ENCODE measurements at regions of chr20 and their contacts with region 1.

Region 1: DNA sequence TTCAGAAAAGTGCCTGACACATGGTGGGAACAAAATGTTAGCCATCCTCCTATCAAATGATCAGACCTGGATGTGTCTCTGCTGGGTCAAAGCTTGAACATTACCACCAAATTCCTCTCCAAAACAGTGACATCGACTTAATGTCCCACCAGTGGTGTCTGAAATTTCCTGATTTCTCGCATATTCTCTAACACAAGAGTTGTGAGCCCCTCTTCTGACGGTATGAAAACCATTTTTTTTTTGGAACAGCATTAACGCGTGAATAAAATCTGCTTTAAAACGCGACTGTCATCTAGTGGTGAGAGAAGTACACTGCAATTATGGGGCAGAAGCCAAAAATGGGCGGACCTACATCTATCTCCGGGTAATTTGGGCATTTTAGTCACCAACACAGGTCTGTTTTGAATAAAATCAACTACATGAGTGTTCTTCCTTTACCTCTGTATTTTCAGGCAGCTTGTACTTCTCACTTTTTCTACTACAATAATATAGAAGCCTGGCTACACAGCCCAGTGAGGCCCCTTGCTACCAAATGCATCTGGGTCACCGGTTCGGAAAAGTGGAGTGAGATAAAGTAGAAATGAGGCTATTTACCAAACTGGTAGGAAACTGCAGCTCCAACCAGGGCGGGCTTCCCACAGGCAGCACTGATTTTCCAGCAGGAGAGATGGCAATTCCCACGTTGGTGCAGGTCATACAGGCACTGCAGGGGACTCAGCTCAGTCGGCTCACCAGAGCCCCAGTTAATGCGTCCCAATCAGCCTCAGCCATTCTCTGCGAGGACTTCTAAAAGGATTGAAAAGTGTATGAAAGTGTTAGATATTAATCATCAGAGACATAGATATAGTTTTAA is 27.4 kb downstream of the MGME1 start:
- DNase-seq: peak; percentile 46
- H3K4me3 Mint-ChIP-seq: no peak overlapping the region
- H3K27ac Mint-ChIP-seq: no peak overlapping the region
- H3K4me1 Mint-ChIP-seq: peaks cover 43% of the 10 kb centered on the region
- H3K27me3 Mint-ChIP-seq: peaks cover 3% of the 10 kb centered on the region

Region 2: DNA sequence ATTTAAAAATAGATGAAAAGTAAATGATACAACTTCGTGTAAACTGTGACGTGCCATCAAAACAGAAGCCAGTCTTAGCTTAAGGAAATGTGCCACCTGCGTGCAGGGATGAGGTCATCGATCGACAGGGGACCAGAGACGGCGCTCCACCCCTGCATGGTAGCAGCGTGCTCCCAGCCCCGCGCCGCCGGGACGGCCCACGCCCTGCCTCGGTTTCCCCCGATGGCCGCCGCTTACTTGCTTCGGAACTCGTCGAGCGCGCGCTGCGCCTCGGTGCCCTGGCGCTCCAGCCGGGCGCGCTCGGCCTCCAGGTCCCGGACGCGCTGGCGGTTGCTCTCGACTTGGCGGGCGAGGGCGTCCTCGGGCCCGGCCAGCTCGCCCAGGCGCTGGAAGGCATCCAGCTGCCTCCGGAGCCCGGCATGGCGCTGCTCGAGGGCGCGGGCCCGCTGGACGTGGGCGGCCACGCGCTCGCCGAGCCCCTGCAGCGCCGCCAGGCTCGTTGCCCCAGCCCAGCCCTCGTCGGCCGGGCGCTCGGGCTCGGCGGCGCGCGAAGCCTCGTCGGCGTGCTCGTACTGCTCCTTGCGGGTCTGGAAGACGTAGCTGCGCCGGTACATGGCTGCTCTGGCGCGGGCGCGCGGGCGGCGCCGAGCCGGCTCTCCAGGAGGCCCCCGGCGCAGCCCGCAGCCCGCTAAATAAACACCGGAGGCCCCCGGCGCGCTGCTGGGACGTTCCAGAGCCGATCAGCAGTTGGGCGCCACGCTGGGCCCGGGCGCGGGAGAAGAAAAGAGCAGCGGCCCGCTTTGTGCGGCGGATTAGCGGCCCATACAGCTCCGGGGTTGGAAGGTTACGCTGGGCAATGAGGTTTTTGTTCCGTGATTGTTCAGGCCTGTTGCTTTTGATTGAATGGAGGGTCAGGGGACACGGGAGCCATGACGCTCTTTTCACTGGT is 465.2 kb before region 1 on chr20 and contains the start of gene BFSP1:
- intact Hi-C with region 1: loop called (anchors 1 kb)
- DNase-seq: peak; percentile 44
- H3K4me3 Mint-ChIP-seq: peak within 1 kb of the TSS; percentile 88
- H3K27ac Mint-ChIP-seq: peak within 1 kb of the TSS; percentile 95
- H3K4me1 Mint-ChIP-seq: peaks cover 30% of the 10 kb centered on the region
- H3K27me3 Mint-ChIP-seq: peaks cover 12% of the 10 kb centered on the region
- total RNA-seq, gene BFSP1: 0.76 and 0.80 TPM in 2 replicates

Region 3: DNA sequence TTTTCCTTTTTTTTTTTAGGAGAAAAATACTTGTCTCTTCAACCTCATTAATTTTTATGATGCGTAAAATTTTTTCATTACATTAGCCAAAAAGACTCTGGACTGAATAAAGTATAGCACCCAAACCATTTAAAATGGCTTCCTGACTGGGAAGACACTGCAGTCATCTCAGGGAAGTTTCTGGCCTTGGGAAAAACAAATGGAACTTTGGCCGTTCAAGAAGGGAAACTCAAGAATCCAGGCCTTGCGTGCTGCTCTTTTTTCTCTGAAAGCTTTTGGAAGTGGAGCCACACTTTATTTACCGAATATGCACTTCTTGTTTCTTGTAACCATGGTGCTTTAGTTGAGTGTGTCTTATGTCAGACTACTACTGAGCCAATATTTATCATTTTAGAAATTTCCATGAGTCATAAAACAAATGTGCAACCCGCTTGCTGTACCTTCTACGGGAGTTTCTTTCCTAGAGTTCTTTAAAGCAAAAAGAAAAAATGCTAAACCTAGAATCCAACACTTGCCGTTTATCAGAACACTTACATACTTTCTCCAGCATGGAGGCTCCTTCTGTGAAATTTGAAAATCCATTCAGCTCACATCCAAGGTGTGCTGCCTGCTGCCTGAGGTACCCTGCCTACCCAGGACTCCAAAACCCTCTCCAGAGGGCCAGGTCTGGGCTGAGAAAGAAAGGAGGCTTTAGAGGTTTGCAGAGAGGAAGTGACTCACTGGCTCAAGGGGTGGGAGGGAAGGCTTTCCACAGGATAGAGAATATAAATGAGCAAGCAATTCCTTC is 437.8 kb before region 1 on chr20:
- intact Hi-C with region 1: loop called (anchors 1 kb)
- DNase-seq: no peak
- H3K4me3 Mint-ChIP-seq: peak overlapping the region; percentile 71
- H3K27ac Mint-ChIP-seq: peak overlapping the region; percentile 95
- H3K4me1 Mint-ChIP-seq: peaks cover 43% of the 10 kb centered on the region
- H3K27me3 Mint-ChIP-seq: no peaks in the 10 kb centered on the region

Region 4: DNA sequence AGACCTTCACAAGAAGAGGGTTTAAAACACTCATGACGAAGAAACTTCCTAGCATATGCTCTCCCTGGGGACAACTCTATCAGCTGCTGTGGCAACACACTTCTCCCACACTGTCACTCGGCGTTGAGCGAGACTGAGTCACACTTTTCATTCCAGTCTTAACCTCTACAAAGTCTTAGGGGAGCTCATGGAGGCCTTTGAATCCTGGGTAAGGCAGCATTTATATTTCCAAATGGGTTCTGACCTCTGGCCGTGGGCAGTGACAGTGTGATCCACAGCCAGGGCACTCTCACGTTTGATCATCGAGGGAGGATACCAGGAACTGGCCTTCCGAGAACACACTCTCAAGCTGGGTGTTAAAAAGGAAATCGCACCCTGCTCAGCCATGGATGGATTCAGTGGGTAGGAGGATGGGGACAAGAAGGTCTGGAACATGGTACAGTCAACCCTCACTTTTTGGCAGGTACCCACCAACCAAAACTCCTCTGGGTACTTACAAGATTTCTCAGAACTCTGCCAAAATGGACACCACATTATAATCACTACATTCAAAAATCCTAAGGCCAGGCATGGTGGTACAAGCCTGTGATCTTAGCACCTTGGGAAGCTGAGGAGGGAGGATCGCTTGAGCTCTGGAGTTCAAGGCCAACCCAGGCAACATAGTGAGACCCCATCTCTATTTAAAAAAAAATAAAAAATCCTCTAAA is 333.7 kb before region 1 on chr20:
- intact Hi-C with region 1: loop called (anchors 5 kb)
- DNase-seq: no peak
- H3K4me3 Mint-ChIP-seq: no peak overlapping the region
- H3K27ac Mint-ChIP-seq: peak overlapping the region; percentile 72
- H3K4me1 Mint-ChIP-seq: peaks cover 70% of the 10 kb centered on the region
- H3K27me3 Mint-ChIP-seq: no peaks in the 10 kb centered on the region

Region 5: DNA sequence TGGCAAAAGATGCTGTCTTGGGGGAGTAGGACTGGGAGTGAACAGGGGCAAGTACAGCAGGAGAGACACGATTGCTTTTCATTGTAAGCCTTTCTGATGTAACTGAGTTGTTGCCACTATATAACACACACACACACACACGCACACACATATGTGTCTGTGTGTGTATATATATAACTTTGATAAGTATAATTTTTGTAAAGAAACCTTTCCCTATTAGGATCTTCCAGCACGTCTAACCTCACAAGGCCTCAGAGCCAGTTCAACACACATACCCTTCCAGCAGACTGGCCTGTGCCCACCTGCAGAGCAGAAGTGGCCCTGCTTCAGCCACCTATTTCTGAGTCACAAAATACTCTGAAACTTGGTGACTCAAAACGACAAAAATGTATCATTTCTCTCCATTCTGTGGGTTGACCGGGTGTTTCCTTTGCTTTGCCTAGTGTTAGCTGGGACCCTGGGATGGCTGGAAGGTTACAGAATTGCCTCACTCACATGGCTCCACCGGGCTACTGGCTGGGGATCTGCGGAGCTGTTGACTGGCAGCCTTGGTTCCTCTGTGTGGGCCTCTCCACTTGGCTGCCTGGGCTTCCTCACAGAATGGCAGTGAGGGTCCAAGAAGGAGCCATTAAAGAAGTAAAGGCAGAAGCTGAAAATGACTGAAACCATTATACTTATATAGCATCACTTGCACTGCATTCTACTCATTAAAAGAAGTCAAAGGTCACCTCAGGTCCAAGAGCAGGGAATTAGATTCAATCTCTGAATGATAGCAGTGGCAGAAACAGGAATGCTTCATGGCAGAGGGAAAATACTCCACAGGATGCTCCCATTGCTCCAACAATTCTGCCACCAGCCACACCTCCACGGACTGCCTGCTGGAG is 170.0 kb before region 1 on chr20:
- intact Hi-C with region 1: loop called (anchors 2 kb)
- DNase-seq: peak; percentile 5
- H3K4me3 Mint-ChIP-seq: no peak overlapping the region
- H3K27ac Mint-ChIP-seq: peak overlapping the region; percentile 71
- H3K4me1 Mint-ChIP-seq: peaks cover 15% of the 10 kb centered on the region
- H3K27me3 Mint-ChIP-seq: peaks cover 4% of the 10 kb centered on the region

Region 6: DNA sequence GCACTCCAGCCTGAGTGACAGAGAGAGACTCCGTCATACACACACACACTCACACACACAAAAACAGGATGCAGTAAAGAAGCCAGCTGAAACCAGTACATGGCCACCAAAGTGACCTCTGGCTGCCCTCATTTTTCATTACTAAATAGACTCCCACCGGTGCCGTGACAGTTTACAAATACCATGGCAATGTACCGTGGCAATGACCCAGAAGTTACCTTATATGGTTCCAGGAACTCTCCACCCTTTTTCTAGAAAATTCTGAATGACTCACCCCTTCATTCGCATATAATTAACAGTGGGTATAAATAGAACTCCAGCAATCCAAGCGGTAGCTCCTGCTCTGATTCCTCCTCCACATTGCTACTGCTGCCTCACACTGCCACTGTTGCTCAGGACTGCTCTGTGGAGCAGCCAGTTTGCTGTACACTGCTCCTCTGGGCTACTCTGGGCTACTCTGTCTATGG is 85.3 kb before region 1 on chr20:
- intact Hi-C with region 1: no loop called
- DNase-seq: no peak
- H3K4me3 Mint-ChIP-seq: no peak overlapping the region
- H3K27ac Mint-ChIP-seq: no peak overlapping the region
- H3K4me1 Mint-ChIP-seq: no peaks in the 10 kb centered on the region
- H3K27me3 Mint-ChIP-seq: peaks cover 14% of the 10 kb centered on the region

Region 7: DNA sequence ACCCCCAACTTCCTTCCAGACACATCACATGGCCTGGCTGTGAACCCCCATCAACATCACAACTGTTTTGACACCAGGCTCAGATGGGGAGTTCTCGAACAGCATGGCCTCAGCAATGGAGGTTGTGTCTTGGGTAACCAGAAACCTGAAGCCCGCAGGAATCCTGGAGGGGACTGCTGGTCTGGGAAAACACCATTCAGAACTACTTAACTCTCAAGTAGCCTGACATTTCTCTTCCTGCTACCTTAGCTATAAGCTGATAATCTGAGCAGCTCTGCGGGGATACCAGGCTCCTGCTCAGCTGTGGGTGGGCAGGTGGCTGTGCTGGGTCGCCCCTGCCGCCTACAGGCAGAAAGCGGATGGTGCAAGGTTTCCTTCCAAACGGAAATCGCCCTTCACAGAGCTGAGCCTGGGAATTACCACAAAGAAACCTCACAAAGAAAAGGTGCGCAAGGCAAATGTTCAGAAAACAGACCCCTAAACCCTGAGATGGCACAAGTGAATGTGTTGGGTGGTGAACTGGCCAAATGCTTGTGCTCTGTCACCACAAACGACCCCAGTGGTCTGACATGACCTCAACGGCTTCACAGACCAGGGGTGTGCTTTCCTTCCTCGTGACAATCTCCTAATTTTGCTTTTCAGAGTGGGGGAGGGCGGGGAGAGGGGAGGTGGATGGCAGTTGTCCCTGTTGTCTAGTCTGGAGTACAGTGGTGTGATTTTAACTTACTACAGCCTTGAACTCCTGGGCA is 57.1 kb before region 1 on chr20:
- intact Hi-C with region 1: loop called (anchors 1 kb)
- DNase-seq: peak; percentile 26
- H3K4me3 Mint-ChIP-seq: no peak overlapping the region
- H3K27ac Mint-ChIP-seq: peak overlapping the region; percentile 81
- H3K4me1 Mint-ChIP-seq: peaks cover 34% of the 10 kb centered on the region
- H3K27me3 Mint-ChIP-seq: no peaks in the 10 kb centered on the region

Region 8: GRCh38 chr20:18276821-18277220 is 280.6 kb after region 1 on chr20:
- intact Hi-C with region 1: loop called (anchors 2 kb)
- DNase-seq: peak; percentile 61
- H3K4me3 Mint-ChIP-seq: no peak overlapping the region
- H3K27ac Mint-ChIP-seq: no peak overlapping the region
- H3K4me1 Mint-ChIP-seq: peaks cover 10% of the 10 kb centered on the region
- H3K27me3 Mint-ChIP-seq: peaks cover 19% of the 10 kb centered on the region